Heart left ventricle (tissue), 16 donors: ENCODE measurements at regions of chr3 and their contacts with region 1.

Region 1: DNA sequence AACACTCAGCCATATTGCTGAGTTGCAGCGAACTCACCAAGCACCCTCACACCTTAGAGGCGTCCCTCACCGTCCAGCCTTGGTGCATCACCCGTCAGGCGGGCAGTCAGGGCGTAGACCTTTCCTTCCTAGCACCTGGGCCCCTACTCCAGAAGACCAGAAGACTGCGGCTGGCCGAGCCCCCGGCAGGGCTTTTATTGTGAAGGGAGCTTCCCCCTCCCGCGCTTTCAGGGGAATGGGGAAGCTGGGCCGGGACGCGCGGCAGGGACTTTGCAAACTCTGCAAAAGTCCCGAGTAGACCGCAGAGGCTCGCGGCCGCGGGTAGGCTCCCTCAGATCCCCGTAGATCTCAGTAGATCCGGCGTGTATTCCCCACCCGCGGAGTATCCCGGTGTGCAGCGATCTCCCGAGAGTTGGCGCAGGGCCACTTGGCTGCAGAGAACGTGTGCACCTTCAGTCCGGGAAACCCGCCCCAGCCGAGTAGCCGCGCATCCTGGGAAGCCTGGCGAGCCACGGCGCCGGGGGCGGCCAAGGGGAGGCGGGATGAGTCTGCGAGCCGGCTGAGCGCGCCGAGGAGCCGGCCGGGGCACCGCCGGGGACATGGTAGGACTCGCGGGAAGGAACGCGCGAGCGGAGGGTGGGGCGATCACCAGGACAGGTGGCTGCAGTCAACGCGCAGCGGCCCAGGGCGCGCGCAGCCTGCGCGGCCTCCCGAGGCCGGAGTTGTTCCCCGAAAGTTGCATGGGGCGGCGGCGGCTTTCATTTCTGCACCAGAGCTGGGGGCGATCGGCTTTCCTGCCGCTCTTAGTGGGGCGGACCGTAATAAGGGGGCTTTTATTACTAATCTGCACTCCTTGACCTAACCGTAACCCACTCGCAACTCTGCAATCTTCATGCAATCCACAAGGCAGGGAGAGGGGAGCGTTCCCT is at the start of gene GASK1A:
- DNase-seq: peak; percentile 38 to 75 (median 50)
- ATAC-seq: peak in 3 of 4 donors; percentile 74 to 82 (median 75)
- H3K4me3 ChIP-seq: peak within 1 kb of the TSS; percentile 9 to 75 (median 61)
- H3K27ac ChIP-seq: peak within 1 kb of the TSS in 1 of 12 donors; percentile 47
- H3K4me1 ChIP-seq: peaks cover 0 to 25% (median 8%) of the 10 kb centered on the region in 12 donors
- H3K27me3 ChIP-seq: peaks cover 5 to 40% (median 12%) of the 10 kb centered on the region in 9 donors
- CTCF ChIP-seq: peak in 1 of 12 donors; percentile 2
- POLR2A ChIP-seq: no peak
- total RNA-seq, gene GASK1A: 0.19 to 2.5 (median 0.52) TPM

Region 2: DNA sequence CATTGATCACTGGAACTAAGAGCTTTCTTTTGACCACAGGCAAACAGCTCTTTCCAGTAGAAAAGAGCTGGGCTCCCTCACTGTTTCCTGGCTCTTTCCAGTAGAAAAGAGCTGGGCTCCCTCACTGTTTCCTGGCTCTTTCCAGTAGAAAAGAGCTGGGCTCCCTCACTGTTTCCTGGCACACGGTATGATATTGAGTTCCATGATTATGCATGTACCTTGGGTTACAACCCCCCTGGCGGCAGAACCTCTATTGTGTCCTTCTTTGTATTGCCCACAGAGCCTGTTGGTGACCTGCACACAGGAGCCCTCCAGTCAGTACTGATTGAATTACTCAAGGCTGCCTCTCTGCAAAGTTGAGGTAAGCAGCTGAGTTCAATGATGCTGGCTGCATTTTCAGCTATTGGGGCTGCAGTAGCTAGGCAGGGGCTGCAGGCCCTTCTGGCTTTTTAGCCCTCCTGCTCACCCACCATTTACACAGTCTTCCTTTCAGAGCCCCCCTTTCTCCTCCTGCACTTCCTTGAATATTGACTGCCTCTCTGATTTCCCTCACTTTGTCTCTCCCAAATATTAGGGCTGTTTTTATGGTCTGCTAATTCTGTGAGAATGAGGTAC is 159.8 kb before region 1 on chr3:
- intact Hi-C with region 1: no loop called
- DNase-seq: no peak
- ATAC-seq: no peak
- H3K4me3 ChIP-seq: no peak overlapping the region
- H3K27ac ChIP-seq: no peak overlapping the region
- H3K4me1 ChIP-seq: peaks cover 0 to 13% (median 7%) of the 10 kb centered on the region in 12 donors
- H3K27me3 ChIP-seq: no peaks in the 10 kb centered on the region
- CTCF ChIP-seq: no peak
- POLR2A ChIP-seq: no peak

Region 3: GRCh38 chr3:42946050-42946449 is 33.3 kb before region 1 on chr3:
- intact Hi-C with region 1: no loop called
- DNase-seq: no peak
- ATAC-seq: no peak
- H3K4me3 ChIP-seq: no peak overlapping the region
- H3K27ac ChIP-seq: no peak overlapping the region
- H3K4me1 ChIP-seq: no peaks in the 10 kb centered on the region
- H3K27me3 ChIP-seq: no peaks in the 10 kb centered on the region
- CTCF ChIP-seq: no peak
- POLR2A ChIP-seq: no peak

Region 4: GRCh38 chr3:43071313-43071893 is 92.1 kb after region 1 on chr3:
- intact Hi-C with region 1: loop called in 1 of 10 experiments (anchors 10 kb)
- DNase-seq: no peak
- ATAC-seq: no peak
- H3K4me3 ChIP-seq: no peak overlapping the region
- H3K27ac ChIP-seq: no peak overlapping the region
- H3K4me1 ChIP-seq: no peaks in the 10 kb centered on the region
- H3K27me3 ChIP-seq: no peaks in the 10 kb centered on the region
- CTCF ChIP-seq: peak in 9 of 12 donors; percentile 24 to 48 (median 34)
- POLR2A ChIP-seq: no peak